CD14-positive monocyte (primary cell): ENCODE measurements at regions of chr6 and their contacts with region 1.

Region 1: DNA sequence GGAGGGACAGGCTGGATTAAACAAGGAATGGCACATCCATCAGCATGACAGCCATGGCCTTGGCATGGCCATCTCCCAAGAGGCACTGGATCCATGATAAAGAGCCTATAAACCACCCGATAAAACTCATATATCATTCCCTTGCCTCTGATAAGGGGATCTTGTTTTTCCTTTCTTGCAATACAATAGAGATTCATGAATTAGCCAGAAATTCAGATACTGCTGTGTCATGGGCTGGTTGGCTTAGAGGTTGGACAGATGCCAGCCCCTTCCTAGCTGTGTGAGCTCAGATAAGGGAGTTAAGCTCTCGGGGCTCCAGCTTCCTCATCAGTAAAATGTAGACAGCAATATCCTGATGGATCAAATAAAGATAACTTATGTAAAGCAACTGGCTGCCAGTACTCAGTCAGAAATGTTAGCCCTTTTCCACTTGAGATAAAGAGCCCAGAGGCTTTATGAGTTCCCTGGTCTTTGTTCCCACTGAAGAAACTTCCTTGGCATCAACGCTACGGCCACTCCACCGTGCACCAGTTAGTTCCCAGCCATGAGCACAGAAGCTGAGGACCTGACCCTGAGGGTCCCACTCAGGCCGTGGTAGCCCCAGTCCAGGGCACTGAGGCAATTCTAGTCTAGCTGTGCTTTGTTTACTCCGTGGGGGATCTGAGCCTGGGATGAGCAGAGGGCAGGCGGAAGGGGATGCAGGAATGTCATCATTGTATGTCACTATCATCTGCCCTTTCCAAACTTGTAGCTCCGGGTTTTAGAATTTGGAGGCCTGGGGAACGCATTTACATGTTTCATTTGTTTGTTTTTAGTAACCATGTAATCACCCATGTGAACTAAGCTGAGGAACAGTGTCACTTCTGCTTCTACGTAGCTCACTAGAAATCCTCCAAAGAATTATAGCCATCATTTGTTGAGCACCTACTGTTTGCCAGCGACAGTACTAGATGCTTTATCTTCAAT is 67.2 kb upstream of the TBC1D7 start:
- DNase-seq: peak; percentile 80 to 88 (median 86)
- H3K4me3 ChIP-seq: peak overlapping the region in 2 of 3 experiments; percentile 11 to 59
- H3K4me3 Mint-ChIP-seq: peak overlapping the region; percentile 60 to 85
- H3K27ac ChIP-seq: peak overlapping the region; percentile 95 to 98
- H3K27ac Mint-ChIP-seq: peak overlapping the region; percentile 93 to 99 (median 99)
- H3K4me1 ChIP-seq: peaks cover 38 to 46% of the 10 kb centered on the region in 2 donors
- H3K4me1 Mint-ChIP-seq: peaks cover 37% of the 10 kb centered on the region
- H3K27me3 ChIP-seq: no peaks in the 10 kb centered on the region
- H3K27me3 Mint-ChIP-seq: peaks cover 0 to 4% (median 1%) of the 10 kb centered on the region in 3 donors
- CTCF ChIP-seq: no peak

Region 2: GRCh38 chr6:13354331-13355042 is 41.1 kb before region 1 on chr6:
- intact Hi-C with region 1: no loop called
- DNase-seq: peak; percentile 69 to 78 (median 78)
- H3K4me3 ChIP-seq: peak overlapping the region in 1 of 3 experiments; percentile 38
- H3K4me3 Mint-ChIP-seq: peak overlapping the region in 1 of 2 donors; percentile 62
- H3K27ac ChIP-seq: peak overlapping the region in 1 of 2 donors; percentile 65
- H3K27ac Mint-ChIP-seq: peak overlapping the region; percentile 38 to 90 (median 88)
- H3K4me1 ChIP-seq: peaks cover 30 to 32% of the 10 kb centered on the region in 2 donors
- H3K4me1 Mint-ChIP-seq: peaks cover 37% of the 10 kb centered on the region
- H3K27me3 ChIP-seq: no peaks in the 10 kb centered on the region
- H3K27me3 Mint-ChIP-seq: peaks cover 0 to 6% (median 2%) of the 10 kb centered on the region in 3 donors
- CTCF ChIP-seq: no peak

Region 3: GRCh38 chr6:13407709-13408695 is 12.4 kb after region 1 on chr6:
- intact Hi-C with region 1: loop called in 1 of 2 experiments (anchors 2 kb)
- DNase-seq: peak; percentile 92 to 97 (median 94)
- H3K4me3 ChIP-seq: peak overlapping the region in 1 of 3 experiments; percentile 27
- H3K4me3 Mint-ChIP-seq: no peak overlapping the region
- H3K27ac ChIP-seq: peak overlapping the region; percentile 91 to 98
- H3K27ac Mint-ChIP-seq: peak overlapping the region; percentile 99 to 100 (median 100)
- H3K4me1 ChIP-seq: peaks cover 81 to 98% of the 10 kb centered on the region in 2 donors
- H3K4me1 Mint-ChIP-seq: peaks cover 87% of the 10 kb centered on the region
- H3K27me3 ChIP-seq: no peaks in the 10 kb centered on the region
- H3K27me3 Mint-ChIP-seq: peaks cover 0 to 6% (median 0%) of the 10 kb centered on the region in 3 donors
- CTCF ChIP-seq: no peak

Region 4: DNA sequence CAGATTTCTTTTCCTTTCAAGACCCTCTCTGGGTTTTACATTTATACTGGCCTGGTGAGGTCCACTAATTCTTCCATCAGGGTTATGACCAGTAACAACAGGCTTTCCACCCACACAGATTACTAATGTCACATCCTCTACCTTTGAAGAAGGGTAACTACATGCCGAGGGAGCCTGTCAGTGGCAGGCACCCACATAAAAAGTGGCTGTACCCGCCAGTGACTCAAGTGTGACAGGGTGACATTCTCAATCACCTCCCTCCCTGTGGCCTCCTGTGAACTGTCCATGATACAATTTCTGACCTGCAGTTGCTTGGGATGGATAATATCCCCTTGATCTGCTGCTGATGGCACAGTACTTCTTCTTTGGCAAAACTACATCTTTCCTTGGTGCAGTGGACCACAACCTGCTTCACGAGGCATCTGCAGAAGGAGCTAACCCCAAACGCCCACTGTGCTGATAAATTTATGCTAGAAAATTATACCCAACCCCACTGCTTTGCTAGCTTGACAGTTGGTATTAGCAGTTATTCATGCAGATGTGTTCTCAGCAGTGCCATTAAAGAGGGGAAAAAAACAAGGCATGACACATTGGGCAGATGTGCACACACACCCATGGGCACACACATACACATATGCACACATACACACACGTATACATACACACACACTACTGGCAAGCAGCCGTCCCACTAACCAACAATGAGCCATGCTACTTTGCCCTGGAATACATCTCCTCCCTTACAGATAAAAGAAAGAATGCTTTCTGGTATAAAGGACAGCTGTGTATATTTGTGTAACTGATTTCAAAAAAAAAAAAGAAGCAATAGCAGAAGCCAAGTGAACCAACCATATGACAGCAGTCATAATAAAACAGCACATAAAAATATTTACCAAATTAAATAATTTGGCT is 71.0 kb after region 1 on chr6:
- intact Hi-C with region 1: loop called in 1 of 2 experiments (anchors 5 kb)
- DNase-seq: peak in 1 of 3 donors; percentile 44
- H3K4me3 ChIP-seq: no peak overlapping the region
- H3K4me3 Mint-ChIP-seq: no peak overlapping the region
- H3K27ac ChIP-seq: peak overlapping the region in 1 of 2 donors; percentile 39
- H3K27ac Mint-ChIP-seq: peak overlapping the region in 6 of 7 donors; percentile 72 to 95 (median 82)
- H3K4me1 ChIP-seq: peaks cover 37 to 39% of the 10 kb centered on the region in 2 donors
- H3K4me1 Mint-ChIP-seq: peaks cover 49% of the 10 kb centered on the region
- H3K27me3 ChIP-seq: no peaks in the 10 kb centered on the region
- H3K27me3 Mint-ChIP-seq: peaks cover 0 to 3% (median 0%) of the 10 kb centered on the region in 3 donors
- CTCF ChIP-seq: no peak